ENCODE measurements at regions of chr6 and their contacts with region 1.

Region 1: DNA sequence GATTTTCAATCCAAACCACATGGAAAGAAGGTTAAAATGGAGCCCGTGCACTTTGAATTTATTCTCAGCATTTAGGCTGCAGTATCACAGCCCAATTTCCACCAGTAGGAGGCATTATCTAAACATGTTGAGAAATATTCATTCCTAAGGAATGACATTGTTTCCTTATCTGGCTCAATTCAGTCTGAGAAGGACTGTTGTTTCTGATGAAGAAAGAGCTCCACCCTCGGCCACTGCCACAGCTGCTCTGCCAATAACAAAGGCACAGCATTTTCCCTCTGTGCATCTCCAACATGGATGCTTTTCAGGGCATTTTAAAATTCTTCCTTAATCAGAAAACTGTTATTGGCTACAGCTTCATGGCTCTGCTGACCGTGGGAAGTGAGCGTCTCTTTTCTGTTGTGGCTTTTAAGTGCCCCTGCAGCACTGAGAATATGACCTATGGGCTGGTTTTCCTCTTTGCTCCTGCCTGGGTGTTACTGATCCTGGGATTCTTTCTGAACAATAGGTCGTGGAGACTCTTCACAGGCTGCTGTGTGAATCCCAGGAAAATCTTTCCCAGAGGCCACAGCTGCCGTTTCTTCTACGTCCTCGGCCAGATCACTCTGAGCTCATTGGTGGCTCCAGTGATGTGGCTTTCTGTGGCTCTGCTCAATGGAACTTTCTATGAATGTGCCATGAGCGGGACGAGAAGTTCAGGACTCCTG is at the start of gene CALHM5:
- DNase-seq: peak; percentile 58
- ATAC-seq: peak; percentile 92
- H3K4me3 ChIP-seq: no peak within 1 kb of the TSS
- H3K27ac ChIP-seq: no peak within 1 kb of the TSS
- H3K4me1 ChIP-seq: peaks cover 0 to 9% of the 10 kb centered on the region in 2 experiments; a peak in 2 of 4 replicates
- H3K27me3 ChIP-seq: no peaks in the 10 kb centered on the region
- CTCF ChIP-seq: peak; percentile 62 to 66 (median 66); a peak in 5 of 6 replicates
- POLR2A ChIP-seq: no peak
- RAD21 ChIP-seq: peak; percentile 56
- total RNA-seq, gene CALHM5: 0.05 TPM

Region 2: DNA sequence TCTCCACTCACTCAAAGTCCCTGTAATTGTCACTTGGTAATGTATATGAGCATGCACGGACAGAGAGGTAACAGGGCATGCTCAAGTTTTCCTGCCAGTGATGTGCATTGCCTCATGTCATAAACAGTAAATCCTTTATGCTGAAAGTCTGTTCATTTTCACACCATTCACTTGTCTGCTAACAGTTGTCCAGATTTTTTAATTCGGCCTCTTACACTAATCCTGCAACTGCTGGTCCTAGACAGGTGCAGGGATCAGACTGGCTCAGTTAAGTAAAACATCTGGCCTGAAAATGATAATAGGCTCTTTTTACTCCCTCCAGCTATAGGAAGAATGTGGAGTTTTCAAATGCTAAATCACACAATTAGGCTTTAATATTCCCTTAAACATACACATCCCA is 568.4 kb after region 1 on chr6:
- CTCF ChIA-PET with region 1: no interaction called
- POLR2A ChIA-PET with region 1: no interaction called
- RAD21 ChIA-PET with region 1: no interaction called
- intact Hi-C with region 1: loop called (anchors 5 kb)
- DNase-seq: no peak
- ATAC-seq: no peak
- H3K4me3 ChIP-seq: no peak overlapping the region
- H3K27ac ChIP-seq: no peak overlapping the region
- H3K4me1 ChIP-seq: no peaks in the 10 kb centered on the region
- H3K27me3 ChIP-seq: no peaks in the 10 kb centered on the region
- CTCF ChIP-seq: no peak
- POLR2A ChIP-seq: no peak
- RAD21 ChIP-seq: no peak